Activated CD4-positive, alpha-beta T cell treated with anti-CD3 and anti-CD28 coated beads, Interleukin-2, amount 10 ng/mL, durations not matched to agents 24 days and 14 days (primary cell): ENCODE measurements at regions of chr7 and their contacts with region 1.

Region 1: DNA sequence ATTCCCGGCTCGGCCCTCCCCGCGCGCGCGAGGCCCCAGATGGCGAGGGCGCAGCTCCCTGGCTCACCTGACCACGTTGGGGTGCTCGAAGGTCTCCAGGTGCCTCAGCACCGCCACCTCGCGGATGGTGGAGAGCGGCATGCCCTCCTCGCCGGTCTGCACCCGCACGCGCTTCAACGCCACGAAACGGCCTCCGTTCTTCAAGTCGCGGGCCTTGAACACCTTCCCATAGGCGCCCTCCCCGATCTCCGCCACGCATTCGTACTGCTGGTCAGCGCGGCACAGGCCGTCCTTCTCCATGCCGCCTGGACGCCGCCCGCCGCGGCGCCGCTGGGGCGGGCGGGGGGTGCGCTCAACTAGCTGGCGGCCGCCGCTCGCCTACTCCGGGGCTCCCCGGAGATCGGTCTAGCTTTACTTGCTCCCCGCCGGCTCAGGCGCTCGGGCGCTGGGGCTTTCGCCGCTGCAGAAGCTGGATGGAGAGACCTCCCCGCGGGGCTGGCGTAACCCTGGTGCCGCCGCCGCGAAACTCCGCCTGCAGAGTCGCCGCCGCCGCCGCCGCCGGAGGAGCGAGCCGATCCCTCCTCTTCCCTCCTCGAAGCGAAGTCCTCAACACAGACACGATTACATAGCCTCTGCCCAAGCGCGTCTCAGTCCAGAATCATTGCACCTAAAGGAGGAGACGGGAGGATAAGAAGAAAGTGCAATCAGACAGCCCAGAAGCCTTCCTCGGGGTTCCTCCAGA is 3.2 kb downstream of the CDK6 start:
- DNase-seq: peak; percentile 97
- H3K4me3 Mint-ChIP-seq: peak overlapping the region; percentile 99
- H3K27ac Mint-ChIP-seq: peak overlapping the region; percentile 100
- H3K4me1 Mint-ChIP-seq: peaks cover 40% of the 10 kb centered on the region
- H3K27me3 Mint-ChIP-seq: peaks cover 6% of the 10 kb centered on the region

Region 2: GRCh38 chr7:91892821-91893340 is 940.3 kb before region 1 on chr7:
- intact Hi-C with region 1: no loop called
- DNase-seq: no peak
- H3K4me3 Mint-ChIP-seq: no peak overlapping the region
- H3K27ac Mint-ChIP-seq: no peak overlapping the region
- H3K4me1 Mint-ChIP-seq: no peaks in the 10 kb centered on the region
- H3K27me3 Mint-ChIP-seq: peaks cover 16% of the 10 kb centered on the region

Region 3: GRCh38 chr7:91957823-91958222 is 875.4 kb before region 1 on chr7:
- intact Hi-C with region 1: no loop called
- DNase-seq: no peak
- H3K4me3 Mint-ChIP-seq: no peak overlapping the region
- H3K27ac Mint-ChIP-seq: no peak overlapping the region
- H3K4me1 Mint-ChIP-seq: no peaks in the 10 kb centered on the region
- H3K27me3 Mint-ChIP-seq: no peaks in the 10 kb centered on the region

Region 4: GRCh38 chr7:92447345-92448204 is 385.6 kb before region 1 on chr7 and contains the start of gene GATAD1:
- intact Hi-C with region 1: loop called (anchors 10 kb)
- DNase-seq: peak; percentile 95
- H3K4me3 Mint-ChIP-seq: peak within 1 kb of the TSS; percentile 94
- H3K27ac Mint-ChIP-seq: peak within 1 kb of the TSS; percentile 93
- H3K4me1 Mint-ChIP-seq: peaks cover 9% of the 10 kb centered on the region
- H3K27me3 Mint-ChIP-seq: peaks cover 2% of the 10 kb centered on the region
- total RNA-seq, gene GATAD1: 21.4 and 22.1 TPM in 2 replicates

Region 5: DNA sequence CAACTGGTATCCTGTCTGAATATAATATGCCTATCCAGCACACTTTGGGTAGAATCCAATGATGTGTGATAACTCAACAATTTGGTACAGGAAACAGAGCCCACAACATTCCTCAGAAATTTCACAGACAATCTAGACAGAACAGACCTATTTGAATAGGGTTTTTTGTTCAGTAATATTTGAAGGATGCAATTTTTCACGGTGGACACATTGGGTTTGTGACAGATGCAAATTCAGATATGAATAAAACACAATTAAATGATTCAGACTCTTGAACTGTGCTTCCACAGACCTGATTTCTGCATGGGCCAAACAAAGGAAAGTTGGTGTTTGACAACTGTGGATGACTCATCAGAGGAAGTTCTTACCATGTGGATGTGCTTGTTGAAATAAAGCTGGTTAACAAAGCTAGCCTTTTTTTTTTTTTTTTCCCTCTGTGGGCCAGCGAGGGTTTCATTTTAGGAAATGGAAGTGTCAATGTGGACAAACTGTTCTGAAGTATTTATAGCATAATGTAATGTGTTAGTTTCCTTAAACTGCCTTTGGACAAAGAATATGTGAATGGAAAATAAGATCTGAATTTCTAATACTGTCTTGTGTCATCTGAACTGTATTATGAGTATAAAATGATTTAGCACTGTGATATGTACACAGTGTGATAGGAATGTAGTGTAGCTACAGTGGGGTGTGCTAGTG is 199.8 kb before region 1 on chr7:
- intact Hi-C with region 1: loop called (anchors 1 kb)
- DNase-seq: peak; percentile 84
- H3K4me3 Mint-ChIP-seq: peak overlapping the region; percentile 65
- H3K27ac Mint-ChIP-seq: peak overlapping the region; percentile 97
- H3K4me1 Mint-ChIP-seq: peaks cover 64% of the 10 kb centered on the region
- H3K27me3 Mint-ChIP-seq: no peaks in the 10 kb centered on the region

Region 6: DNA sequence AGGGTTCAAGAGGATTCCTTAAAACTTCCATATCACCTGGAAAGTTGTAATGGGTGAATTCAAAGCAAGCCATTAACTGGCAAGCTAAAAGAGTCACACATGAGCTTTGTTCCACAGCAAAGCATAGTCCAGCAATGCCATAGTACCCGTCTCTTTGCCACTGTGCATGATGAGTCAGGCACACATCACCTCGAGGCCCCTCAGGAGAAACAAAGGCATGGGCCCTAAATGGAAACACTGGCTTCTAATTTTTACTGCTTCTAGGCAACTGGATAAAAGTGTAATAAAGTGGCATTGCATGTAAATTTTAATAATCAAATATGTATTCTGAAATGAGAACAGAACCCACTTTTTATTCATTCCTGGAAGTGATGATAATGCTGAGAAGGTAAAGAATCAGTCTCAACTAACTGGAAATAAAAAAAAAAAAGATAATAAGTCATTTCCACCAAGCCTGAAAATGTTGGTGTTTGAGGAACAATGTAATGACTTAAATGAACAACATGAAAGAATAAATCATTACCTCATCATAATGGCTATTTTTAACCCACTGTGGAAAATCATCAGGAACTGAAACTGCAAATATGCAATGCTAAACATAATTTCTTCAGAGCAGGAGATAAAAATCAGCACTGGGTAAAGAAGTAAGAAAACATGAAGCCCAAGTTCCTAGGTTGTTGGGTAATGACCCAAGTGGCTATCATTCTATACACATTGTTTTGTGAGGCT is 101.7 kb before region 1 on chr7:
- intact Hi-C with region 1: loop called (anchors 2 kb)
- DNase-seq: no peak
- H3K4me3 Mint-ChIP-seq: peak overlapping the region; percentile 64
- H3K27ac Mint-ChIP-seq: peak overlapping the region; percentile 95
- H3K4me1 Mint-ChIP-seq: peaks cover 54% of the 10 kb centered on the region
- H3K27me3 Mint-ChIP-seq: no peaks in the 10 kb centered on the region

Region 7: GRCh38 chr7:92806496-92806895 is 26.7 kb before region 1 on chr7:
- intact Hi-C with region 1: no loop called
- DNase-seq: no peak
- H3K4me3 Mint-ChIP-seq: no peak overlapping the region
- H3K27ac Mint-ChIP-seq: no peak overlapping the region
- H3K4me1 Mint-ChIP-seq: peaks cover 71% of the 10 kb centered on the region
- H3K27me3 Mint-ChIP-seq: no peaks in the 10 kb centered on the region

Region 8: DNA sequence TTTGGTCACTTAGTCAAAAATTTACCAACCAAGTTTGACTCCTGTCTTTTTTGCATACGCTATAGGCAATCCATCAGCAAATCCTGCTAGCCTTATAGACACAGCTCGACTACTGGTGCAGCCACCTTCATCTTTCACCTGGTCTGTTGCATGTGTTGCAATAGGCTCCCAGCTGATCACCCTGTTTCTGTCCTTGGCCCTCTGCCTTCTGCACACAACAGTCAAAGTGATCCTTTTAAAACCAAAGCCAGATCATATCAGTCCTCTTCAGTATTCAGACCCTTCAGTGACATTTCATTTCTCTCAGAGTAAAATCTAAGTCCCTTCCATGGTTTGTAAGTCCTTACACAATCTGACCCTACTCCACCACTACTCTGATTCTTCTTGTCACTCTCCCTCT is 14.1 kb after region 1 on chr7:
- intact Hi-C with region 1: loop called (anchors 1 kb)
- DNase-seq: no peak
- H3K4me3 Mint-ChIP-seq: no peak overlapping the region
- H3K27ac Mint-ChIP-seq: no peak overlapping the region
- H3K4me1 Mint-ChIP-seq: peaks cover 7% of the 10 kb centered on the region
- H3K27me3 Mint-ChIP-seq: peaks cover 12% of the 10 kb centered on the region

Region 9: DNA sequence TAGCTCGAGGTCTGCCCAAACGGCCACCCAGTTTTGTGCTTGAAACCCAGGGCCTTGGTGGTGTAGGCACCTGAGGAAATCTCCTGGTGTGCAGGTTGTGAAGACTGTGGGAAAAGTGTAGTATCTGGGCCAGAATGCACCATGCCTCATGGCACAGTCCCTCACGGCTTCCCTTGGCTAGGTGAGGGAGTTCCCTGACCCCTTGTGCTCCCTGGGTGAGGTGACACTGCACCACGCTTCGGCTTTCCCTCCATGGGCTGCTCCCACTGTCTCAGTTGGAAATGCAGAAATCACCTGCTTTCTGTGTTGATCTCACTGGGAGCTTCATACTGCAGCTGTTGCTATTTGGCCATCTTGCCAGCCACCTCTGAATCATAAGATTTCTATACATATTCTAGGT is 65.6 kb after region 1 on chr7:
- intact Hi-C with region 1: no loop called
- DNase-seq: no peak
- H3K4me3 Mint-ChIP-seq: no peak overlapping the region
- H3K27ac Mint-ChIP-seq: no peak overlapping the region
- H3K4me1 Mint-ChIP-seq: peaks cover 10% of the 10 kb centered on the region
- H3K27me3 Mint-ChIP-seq: no peaks in the 10 kb centered on the region

Region 10: DNA sequence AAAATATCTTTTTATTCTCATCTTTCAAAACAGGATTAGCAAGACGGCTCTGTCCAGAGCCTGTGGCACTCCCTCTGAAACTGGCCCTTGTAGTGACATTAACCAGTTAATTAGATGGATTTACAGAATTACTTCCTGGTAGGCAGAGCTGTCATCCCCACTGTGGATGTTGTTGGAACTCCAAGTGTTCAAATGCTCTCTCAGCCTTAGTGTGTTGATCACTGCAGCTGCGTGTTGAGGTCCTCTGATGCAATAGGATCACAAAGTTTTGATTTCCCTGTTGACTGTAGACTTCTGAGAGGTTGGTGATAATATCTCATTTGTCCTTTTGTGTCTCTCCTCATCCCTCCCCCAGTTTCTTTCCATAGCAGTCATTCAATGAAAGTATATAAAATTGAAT is 120.5 kb after region 1 on chr7:
- intact Hi-C with region 1: loop called (anchors 2 kb)
- DNase-seq: no peak
- H3K4me3 Mint-ChIP-seq: no peak overlapping the region
- H3K27ac Mint-ChIP-seq: peak overlapping the region; percentile 78
- H3K4me1 Mint-ChIP-seq: peaks cover 14% of the 10 kb centered on the region
- H3K27me3 Mint-ChIP-seq: no peaks in the 10 kb centered on the region

Region 11: DNA sequence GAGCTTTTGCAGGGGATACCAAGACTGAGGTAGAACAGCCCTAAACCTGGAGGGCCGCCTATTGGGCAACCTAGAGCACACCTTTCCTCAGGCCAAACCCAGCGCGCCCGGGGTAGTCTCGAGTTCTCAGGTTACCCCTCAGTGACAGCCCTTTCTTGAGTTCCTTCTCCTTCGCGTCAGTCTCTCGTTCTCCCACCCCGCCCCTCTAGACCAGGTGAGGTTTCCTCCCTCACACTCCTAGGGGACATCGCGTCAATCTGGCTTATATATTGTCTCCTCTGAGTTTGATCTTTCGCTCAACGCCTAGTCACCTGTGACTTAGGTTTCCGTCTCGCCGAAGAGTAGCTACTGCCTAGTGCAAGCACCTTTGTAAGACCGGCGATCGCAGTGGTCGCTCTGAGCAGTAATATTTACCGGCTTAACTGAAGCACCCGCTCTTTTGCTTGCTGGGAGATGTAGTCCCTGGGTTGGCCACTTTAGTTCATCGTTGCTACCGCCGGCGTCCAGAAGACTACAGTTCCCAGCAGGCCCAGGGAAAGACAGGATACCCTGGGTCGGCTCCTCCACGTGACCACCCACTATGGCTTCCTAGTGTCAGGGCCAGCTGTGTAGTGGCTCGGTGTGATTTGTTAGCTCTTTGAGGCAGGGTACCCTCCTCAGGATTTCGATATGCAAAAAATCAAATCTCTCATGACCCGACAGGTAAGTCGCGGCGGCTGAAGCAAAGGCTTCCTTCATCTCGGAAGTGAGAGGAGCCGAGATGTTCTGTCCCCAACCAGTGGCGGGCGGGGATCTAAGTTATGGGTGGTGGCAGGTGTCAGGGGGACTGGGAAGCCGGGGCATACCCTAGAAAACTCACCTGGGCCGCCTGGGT is 398.8 kb after region 1 on chr7 and contains the start of gene VPS50:
- intact Hi-C with region 1: loop called (anchors 1 kb)
- DNase-seq: peak; percentile 98
- H3K4me3 Mint-ChIP-seq: peak within 1 kb of the TSS; percentile 99
- H3K27ac Mint-ChIP-seq: peak within 1 kb of the TSS; percentile 93
- H3K4me1 Mint-ChIP-seq: peaks cover 13% of the 10 kb centered on the region
- H3K27me3 Mint-ChIP-seq: peaks cover 4% of the 10 kb centered on the region
- total RNA-seq, gene VPS50: 14.7 and 17.1 TPM in 2 replicates